Activated T-helper 2 cell treated with anti-CD3 and anti-CD28 coated beads, Interferon-gamma antibody, Interleukin-2, Interleukin-4, amounts not matched to agents 10 μg/mL and 5 μg/mL and 100 μg/mL, durations not matched to agents 14 hours and 24 hours and 36 hours (primary cell): ENCODE measurements at regions of chr6 and their contacts with region 1.

Region 1: DNA sequence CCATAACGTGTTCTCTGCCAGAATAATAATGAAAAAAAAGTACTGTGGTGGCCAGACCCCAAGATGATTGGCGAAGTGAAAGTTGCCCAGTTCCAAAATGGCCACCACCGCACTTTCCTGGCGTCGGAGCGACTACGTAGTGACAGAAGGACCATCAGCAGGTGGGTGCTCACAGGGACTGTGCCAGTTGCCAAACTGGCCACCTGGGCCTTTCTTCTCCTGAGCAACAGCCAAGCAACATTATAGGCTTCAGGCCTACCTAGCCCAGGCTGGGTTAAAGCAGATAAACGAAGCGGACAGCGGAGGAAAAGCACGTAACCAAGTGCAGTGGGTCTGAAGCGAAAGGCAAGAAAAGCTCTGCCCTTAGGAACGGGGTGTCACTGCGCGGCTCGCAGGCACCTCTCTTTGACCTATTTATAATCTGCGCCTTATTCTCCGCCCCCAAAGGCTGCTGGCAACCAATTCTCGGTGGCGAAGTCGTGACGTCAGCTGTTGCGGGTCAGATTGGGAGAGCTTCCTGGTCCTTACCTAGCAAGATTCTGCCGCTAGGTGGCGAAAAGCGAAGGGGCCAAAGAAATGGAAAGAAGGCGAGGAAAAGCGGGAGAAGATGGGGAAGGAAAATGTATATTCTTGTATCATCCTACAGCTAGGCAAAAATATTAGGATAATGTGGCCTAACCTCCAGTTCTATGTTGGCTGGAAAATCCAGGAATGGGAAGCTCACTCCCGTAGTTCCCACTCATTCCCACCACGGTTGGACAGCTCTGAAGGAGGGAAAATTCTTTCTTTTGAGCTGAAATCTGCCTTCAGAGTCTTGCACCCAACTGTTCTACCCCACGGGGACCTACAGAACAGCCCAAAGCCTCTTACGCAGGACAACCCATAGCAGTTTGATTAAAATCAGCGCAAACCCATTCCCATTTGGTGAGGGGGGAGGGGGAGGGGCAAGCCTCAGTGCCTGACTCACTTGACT is 6.9 kb upstream of the MOG start:
- DNase-seq: peak; percentile 94
- H3K4me3 Mint-ChIP-seq: peak overlapping the region; percentile 88
- H3K27ac Mint-ChIP-seq: peak overlapping the region; percentile 98
- H3K4me1 Mint-ChIP-seq: peaks cover 7% of the 10 kb centered on the region
- H3K27me3 Mint-ChIP-seq: peaks cover 4% of the 10 kb centered on the region

Region 2: GRCh38 chr6:29632789-29633533 is 17.0 kb before region 1 on chr6 and contains the start of gene GABBR1:
- intact Hi-C with region 1: loop called (anchors 1 kb)
- DNase-seq: peak; percentile 68
- H3K4me3 Mint-ChIP-seq: peak within 1 kb of the TSS; percentile 81
- H3K27ac Mint-ChIP-seq: no peak within 1 kb of the TSS
- H3K4me1 Mint-ChIP-seq: peaks cover 38% of the 10 kb centered on the region
- H3K27me3 Mint-ChIP-seq: peaks cover 49% of the 10 kb centered on the region
- total RNA-seq, gene GABBR1: 17.0 and 21.1 TPM in 2 replicates

Region 3: GRCh38 chr6:29723262-29723665 is 73.3 kb after region 1 on chr6 and contains the start of gene HLA-F:
- intact Hi-C with region 1: loop called (anchors 10 kb)
- DNase-seq: peak; percentile 77
- H3K4me3 Mint-ChIP-seq: peak within 1 kb of the TSS; percentile 89
- H3K27ac Mint-ChIP-seq: peak within 1 kb of the TSS; percentile 89
- H3K4me1 Mint-ChIP-seq: peaks cover 48% of the 10 kb centered on the region
- H3K27me3 Mint-ChIP-seq: no peaks in the 10 kb centered on the region
- total RNA-seq, gene HLA-F: 266 and 278 TPM in 2 replicates